HepG2 (cell line): ENCODE measurements at regions of chr2 and their contacts with region 1.

Region 1: GRCh38 chr2:66429071-66429477 is 5.9 kb upstream of the MEIS1 start:
- DNase-seq: peak; percentile 61
- ATAC-seq: no peak
- H3K4me3 ChIP-seq: no peak overlapping the region
- H3K27ac ChIP-seq: no peak overlapping the region
- H3K4me1 ChIP-seq: peaks cover 22% of the 10 kb centered on the region
- H3K27me3 ChIP-seq: peaks cover 5 to 36% of the 10 kb centered on the region in 2 experiments
- CTCF ChIP-seq: peak; percentile 87
- EP300 ChIP-seq: no peak
- POLR2A ChIP-seq: no peak
- RAD21 ChIP-seq: peak; percentile 59; the same call in 1 of the 2 replicates

Region 2: GRCh38 chr2:65640793-65641103 is 788.3 kb before region 1 on chr2:
- CTCF ChIA-PET with region 1: no interaction called
- POLR2A ChIA-PET with region 1: no interaction called
- in situ Hi-C with region 1: loop called (anchors 25 kb)
- intact Hi-C with region 1: loop called (anchors 5 kb)
- DNase-seq: no peak
- ATAC-seq: no peak
- H3K4me3 ChIP-seq: no peak overlapping the region
- H3K27ac ChIP-seq: no peak overlapping the region
- H3K4me1 ChIP-seq: peaks cover 5% of the 10 kb centered on the region; the same call in 1 of the 2 replicates
- H3K27me3 ChIP-seq: peaks cover 0 to 10% of the 10 kb centered on the region in 2 experiments; a peak in 2 of 5 replicates
- CTCF ChIP-seq: no peak
- EP300 ChIP-seq: no peak
- POLR2A ChIP-seq: no peak
- RAD21 ChIP-seq: no peak

Region 3: GRCh38 chr2:66574701-66575624 is 145.9 kb after region 1 on chr2:
- CTCF ChIA-PET with region 1: interaction called, 23 read pairs
- POLR2A ChIA-PET with region 1: interaction called, 5 read pairs
- in situ Hi-C with region 1: loop called (anchors 5 kb)
- intact Hi-C with region 1: loop called (anchors 1 kb)
- DNase-seq: peak; percentile 57
- ATAC-seq: peak; percentile 61
- H3K4me3 ChIP-seq: peak overlapping the region; percentile 53 to 70 (median 62)
- H3K27ac ChIP-seq: no peak overlapping the region
- H3K4me1 ChIP-seq: peaks cover 36% of the 10 kb centered on the region
- H3K27me3 ChIP-seq: peaks cover 20 to 45% of the 10 kb centered on the region in 2 experiments
- CTCF ChIP-seq: peak; percentile 86
- EP300 ChIP-seq: no peak
- POLR2A ChIP-seq: no peak
- RAD21 ChIP-seq: peak; percentile 59

Region 4: DNA sequence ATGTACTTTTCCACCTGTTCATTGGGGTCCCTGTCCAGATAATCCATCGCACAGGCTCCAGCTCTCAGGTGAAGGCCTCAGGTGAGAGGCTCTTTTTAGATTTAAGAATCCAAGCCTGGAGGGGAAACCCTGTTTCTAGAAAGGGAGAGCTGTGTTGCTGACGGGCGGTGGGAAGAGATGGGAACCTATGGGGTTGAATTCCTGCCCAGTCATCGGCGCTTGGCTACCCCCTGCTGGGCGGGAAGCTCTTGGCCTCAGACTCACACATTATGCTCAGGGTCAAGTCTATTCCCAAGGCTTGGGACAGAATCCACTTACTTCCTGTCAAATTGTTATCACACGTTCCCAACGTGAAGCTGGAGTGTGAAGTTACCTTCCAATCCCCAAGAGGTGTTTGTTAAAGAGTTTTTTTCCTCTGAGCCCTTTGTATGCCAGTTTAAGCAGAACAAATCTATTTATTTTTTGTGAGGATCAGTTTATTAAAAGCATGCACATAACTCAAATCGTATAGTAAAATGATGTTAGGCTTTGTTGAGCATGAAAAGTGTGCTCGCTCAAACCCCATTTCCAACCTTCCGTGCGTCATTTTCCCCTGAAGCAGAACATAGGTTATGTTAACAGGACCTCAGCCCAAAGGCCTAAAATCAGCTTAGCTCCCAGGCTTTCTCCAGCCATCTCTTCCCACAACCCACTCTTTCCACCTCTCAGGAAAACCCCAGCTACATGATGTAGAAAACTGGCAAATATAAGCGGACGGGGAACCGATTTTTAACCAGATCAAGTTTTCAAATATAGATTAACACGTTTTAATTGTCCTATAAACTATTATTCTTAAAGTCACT is 786.4 kb after region 1 on chr2:
- CTCF ChIA-PET with region 1: interaction called, 3 read pairs
- POLR2A ChIA-PET with region 1: no interaction called
- in situ Hi-C with region 1: loop called (anchors 25 kb)
- intact Hi-C with region 1: loop called (anchors 1 kb)
- DNase-seq: peak; percentile 35
- ATAC-seq: peak; percentile 99
- H3K4me3 ChIP-seq: no peak overlapping the region
- H3K27ac ChIP-seq: no peak overlapping the region
- H3K4me1 ChIP-seq: no peaks in the 10 kb centered on the region
- H3K27me3 ChIP-seq: no peaks in the 10 kb centered on the region
- CTCF ChIP-seq: peak; percentile 85
- EP300 ChIP-seq: no peak
- POLR2A ChIP-seq: no peak
- RAD21 ChIP-seq: peak; percentile 89

Region 5: GRCh38 chr2:67322353-67323001 is 893.4 kb after region 1 on chr2:
- CTCF ChIA-PET with region 1: no interaction called
- POLR2A ChIA-PET with region 1: no interaction called
- in situ Hi-C with region 1: loop called (anchors 25 kb)
- intact Hi-C with region 1: loop called (anchors 1 kb)
- DNase-seq: peak; percentile 65
- ATAC-seq: peak; percentile 100
- H3K4me3 ChIP-seq: no peak overlapping the region
- H3K27ac ChIP-seq: no peak overlapping the region
- H3K4me1 ChIP-seq: no peaks in the 10 kb centered on the region
- H3K27me3 ChIP-seq: no peaks in the 10 kb centered on the region
- CTCF ChIP-seq: peak; percentile 83
- EP300 ChIP-seq: no peak
- POLR2A ChIP-seq: no peak
- RAD21 ChIP-seq: peak; percentile 75

Region 6: DNA sequence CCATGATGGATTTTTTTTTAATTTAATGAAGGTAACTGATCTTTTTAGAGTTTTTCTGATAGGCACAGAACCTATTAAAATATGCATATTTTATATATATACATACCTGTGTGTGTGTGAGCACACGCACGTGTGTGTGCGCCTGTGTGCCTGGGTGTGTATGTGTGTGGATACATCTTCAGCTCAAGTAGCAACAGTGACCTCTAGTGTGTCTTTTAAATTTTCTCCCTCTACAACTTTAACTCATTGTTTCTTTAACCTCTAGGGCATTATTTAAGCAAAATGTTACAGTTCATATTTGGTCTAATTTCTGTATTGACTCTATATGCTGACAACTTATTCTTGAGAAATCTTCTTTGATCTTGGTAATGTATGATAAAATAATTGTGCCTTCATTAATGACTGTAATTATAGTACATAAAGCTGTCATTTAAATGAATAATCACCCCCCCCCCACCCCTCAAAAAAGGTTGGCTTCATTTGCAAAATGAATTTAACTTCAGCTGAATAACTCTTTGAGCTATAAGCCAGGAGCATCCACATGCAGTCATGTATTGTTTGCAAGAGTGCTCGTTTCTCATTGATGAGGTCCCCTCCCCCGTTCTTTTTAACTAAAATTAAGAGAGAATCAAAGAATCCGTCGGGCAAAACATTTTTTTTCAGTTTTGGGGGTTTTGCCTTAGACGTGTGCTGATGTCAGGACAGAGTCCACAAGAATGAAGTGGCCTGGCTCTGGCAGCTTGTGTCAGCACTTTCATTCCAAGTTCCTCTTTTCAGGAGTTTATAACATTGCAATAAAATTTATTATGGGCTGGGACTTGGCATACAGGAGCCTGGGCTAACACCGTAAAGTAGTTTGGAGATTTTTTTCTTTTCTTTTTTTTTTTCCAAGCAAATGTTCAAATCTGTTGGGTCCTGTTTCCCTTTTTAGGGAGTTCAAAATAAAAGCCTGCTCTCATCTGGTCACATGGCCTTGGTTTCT is 1048.0 kb after region 1 on chr2:
- CTCF ChIA-PET with region 1: no interaction called
- POLR2A ChIA-PET with region 1: no interaction called
- in situ Hi-C with region 1: no loop called
- intact Hi-C with region 1: loop called (anchors 2 kb)
- DNase-seq: peak; percentile 32
- ATAC-seq: peak; percentile 80
- H3K4me3 ChIP-seq: no peak overlapping the region
- H3K27ac ChIP-seq: no peak overlapping the region
- H3K4me1 ChIP-seq: no peaks in the 10 kb centered on the region
- H3K27me3 ChIP-seq: no peaks in the 10 kb centered on the region; a peak in 1 of 5 replicates
- CTCF ChIP-seq: peak; percentile 62
- EP300 ChIP-seq: no peak
- POLR2A ChIP-seq: no peak
- RAD21 ChIP-seq: no peak

Region 7: GRCh38 chr2:67650291-67651133 is 1221.4 kb after region 1 on chr2:
- CTCF ChIA-PET with region 1: no interaction called
- POLR2A ChIA-PET with region 1: no interaction called
- in situ Hi-C with region 1: no loop called
- intact Hi-C with region 1: loop called (anchors 10 kb)
- DNase-seq: peak; percentile 63
- ATAC-seq: peak; percentile 99
- H3K4me3 ChIP-seq: no peak overlapping the region
- H3K27ac ChIP-seq: no peak overlapping the region
- H3K4me1 ChIP-seq: no peaks in the 10 kb centered on the region
- H3K27me3 ChIP-seq: no peaks in the 10 kb centered on the region
- CTCF ChIP-seq: peak; percentile 81
- EP300 ChIP-seq: no peak
- POLR2A ChIP-seq: no peak
- RAD21 ChIP-seq: peak; percentile 66; the same call in 1 of the 2 replicates